OCI-LY7 (cell line): ENCODE measurements at regions of chr14 and their contacts with region 1.

Region 1: GRCh38 chr14:29536886-29537511 is 390.6 kb downstream of the PRKD1 start:
- DNase-seq: peak; percentile 3
- H3K4me3 ChIP-seq: no peak overlapping the region
- H3K27ac ChIP-seq: no peak overlapping the region
- H3K4me1 ChIP-seq: no peaks in the 10 kb centered on the region
- CTCF ChIP-seq: peak; percentile 77

Region 2: DNA sequence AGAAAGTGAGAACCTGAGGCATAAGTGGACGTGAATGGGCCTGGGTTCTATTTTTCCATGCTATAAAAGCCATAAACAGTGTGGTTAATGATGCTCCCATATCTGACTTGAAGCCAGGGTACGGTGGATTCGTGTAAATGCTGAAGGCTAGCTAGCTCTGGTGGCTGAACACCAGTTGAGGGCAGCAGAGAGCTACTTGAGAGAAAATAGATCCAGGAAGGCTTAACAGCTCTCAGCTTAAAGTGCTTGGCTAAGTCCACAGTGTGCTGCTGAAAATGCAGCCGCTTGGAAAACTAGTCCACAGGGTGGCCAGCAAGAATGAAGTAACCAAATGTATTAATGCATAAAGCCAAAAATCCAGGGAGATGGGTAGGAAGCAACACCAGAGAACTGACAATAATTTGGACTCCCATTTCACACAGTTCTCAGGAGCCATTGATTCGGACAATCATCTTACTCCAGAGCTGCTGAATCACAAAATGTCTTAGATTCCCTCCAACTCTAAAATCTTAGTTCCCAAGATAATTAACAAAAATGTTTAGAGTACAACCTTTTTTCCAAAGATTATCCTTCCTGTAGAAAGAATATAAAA is 785.4 kb before region 1 on chr14:
- CTCF ChIA-PET with region 1: no interaction called
- POLR2A ChIA-PET with region 1: no interaction called
- intact Hi-C with region 1: loop called (anchors 2 kb)
- DNase-seq: peak; percentile 31
- H3K4me3 ChIP-seq: no peak overlapping the region
- H3K27ac ChIP-seq: no peak overlapping the region
- H3K4me1 ChIP-seq: no peaks in the 10 kb centered on the region
- CTCF ChIP-seq: peak; percentile 74

Region 3: GRCh38 chr14:30322819-30323218 is 785.8 kb after region 1 on chr14:
- CTCF ChIA-PET with region 1: no interaction called
- POLR2A ChIA-PET with region 1: no interaction called
- intact Hi-C with region 1: no loop called
- DNase-seq: no peak
- H3K4me3 ChIP-seq: no peak overlapping the region
- H3K27ac ChIP-seq: no peak overlapping the region
- H3K4me1 ChIP-seq: no peaks in the 10 kb centered on the region
- CTCF ChIP-seq: no peak